CD4-positive, alpha-beta memory T cell (primary cell): ENCODE measurements at regions of chr2 and their contacts with region 1.

Region 1: DNA sequence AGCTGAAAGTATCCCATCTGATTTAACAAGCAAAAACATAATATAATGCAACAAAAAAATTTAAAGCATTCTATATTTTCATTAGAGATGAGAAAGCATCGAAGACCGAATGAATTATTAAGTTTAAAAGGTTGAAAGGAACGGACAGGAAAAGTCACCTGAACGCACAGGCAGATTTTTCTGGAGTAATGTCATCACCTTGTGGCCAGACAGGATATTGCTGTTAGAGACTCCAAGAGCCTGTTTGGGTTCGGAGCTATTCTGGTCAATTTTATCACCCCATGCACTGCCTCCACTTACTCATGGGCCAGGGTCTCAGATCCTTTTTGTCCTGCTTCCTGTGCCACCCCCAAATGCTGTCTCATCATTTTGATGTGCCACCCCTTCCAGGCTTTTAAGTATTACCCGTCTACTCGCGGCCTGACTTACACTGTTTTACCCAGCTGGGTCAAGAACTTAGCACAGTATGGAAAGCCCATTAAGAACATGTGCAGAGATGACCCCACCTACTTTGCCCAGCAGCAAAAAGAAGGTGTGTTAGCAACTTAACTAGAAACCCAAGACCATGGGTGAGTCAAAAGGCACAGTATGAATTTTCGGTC is 27.3 kb downstream of the GKN2 start:
- DNase-seq: peak; percentile 57 to 73 (median 66)
- H3K4me3 ChIP-seq: no peak overlapping the region
- H3K4me3 Mint-ChIP-seq: peak overlapping the region in 1 of 8 donors; percentile 17
- H3K27ac ChIP-seq: no peak overlapping the region
- H3K27ac Mint-ChIP-seq: peak overlapping the region in 3 of 7 donors; percentile 17 to 43 (median 24)
- H3K4me1 ChIP-seq: peaks cover 4% of the 10 kb centered on the region
- H3K4me1 Mint-ChIP-seq: peaks cover 0 to 4% (median 2%) of the 10 kb centered on the region in 4 donors
- H3K27me3 ChIP-seq: no peaks in the 10 kb centered on the region
- H3K27me3 Mint-ChIP-seq: peaks cover 5 to 6% of the 10 kb centered on the region in 2 donors

Region 2: GRCh38 chr2:68487773-68488355 is 437.5 kb before region 1 on chr2:
- CTCF ChIA-PET with region 1: interaction called, 40 read pairs
- POLR2A ChIA-PET with region 1: interaction called, 6 read pairs
- intact Hi-C with region 1: loop called (anchors 1 kb)
- DNase-seq: peak in 4 of 5 donors; percentile 24 to 39 (median 31)
- H3K4me3 ChIP-seq: no peak overlapping the region
- H3K4me3 Mint-ChIP-seq: peak overlapping the region in 1 of 8 donors; percentile 28
- H3K27ac ChIP-seq: no peak overlapping the region
- H3K27ac Mint-ChIP-seq: peak overlapping the region in 2 of 7 donors; percentile 35 to 38
- H3K4me1 ChIP-seq: no peaks in the 10 kb centered on the region
- H3K4me1 Mint-ChIP-seq: peaks cover 0 to 5% (median 1%) of the 10 kb centered on the region in 4 donors
- H3K27me3 ChIP-seq: no peaks in the 10 kb centered on the region
- H3K27me3 Mint-ChIP-seq: no peaks in the 10 kb centered on the region

Region 3: DNA sequence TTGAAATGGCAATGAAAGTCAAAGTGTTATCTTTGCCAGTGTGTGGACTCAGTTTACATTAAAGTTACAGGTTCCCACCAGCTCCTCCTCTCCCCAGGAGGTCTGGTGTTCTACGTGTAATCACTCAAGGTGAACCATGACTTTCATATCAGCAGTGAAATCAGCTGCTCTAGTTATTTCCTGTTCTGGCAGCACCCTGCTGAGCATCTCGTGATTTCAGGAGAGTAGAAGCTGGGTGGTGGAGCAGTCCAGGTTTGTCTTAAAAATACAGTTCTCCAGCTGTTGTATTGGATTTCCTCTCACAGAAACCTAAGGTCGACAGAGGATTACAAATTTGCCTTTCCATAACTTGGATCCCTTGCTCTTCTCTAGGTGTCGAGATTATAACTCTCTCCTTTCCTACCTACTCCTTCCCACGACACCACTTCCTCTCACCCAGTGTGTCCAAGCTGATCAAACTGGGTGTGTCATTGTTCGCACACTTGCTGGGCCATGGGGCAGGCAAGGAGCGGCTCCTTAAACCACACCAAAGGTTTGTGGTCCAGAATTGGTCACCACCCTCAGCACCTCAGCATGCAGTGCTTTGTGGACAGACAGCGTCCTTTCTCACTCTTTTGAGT is 203.8 kb before region 1 on chr2:
- CTCF ChIA-PET with region 1: interaction called, 10 read pairs
- POLR2A ChIA-PET with region 1: no interaction called
- intact Hi-C with region 1: no loop called
- DNase-seq: peak; percentile 64 to 78 (median 70)
- H3K4me3 ChIP-seq: peak overlapping the region in 1 of 2 donors; percentile 6
- H3K4me3 Mint-ChIP-seq: peak overlapping the region; percentile 63 to 89 (median 83)
- H3K27ac ChIP-seq: peak overlapping the region; percentile 54
- H3K27ac Mint-ChIP-seq: peak overlapping the region; percentile 91 to 98 (median 96)
- H3K4me1 ChIP-seq: peaks cover 96% of the 10 kb centered on the region
- H3K4me1 Mint-ChIP-seq: peaks cover 75 to 99% (median 90%) of the 10 kb centered on the region in 4 donors
- H3K27me3 ChIP-seq: no peaks in the 10 kb centered on the region
- H3K27me3 Mint-ChIP-seq: no peaks in the 10 kb centered on the region

Region 4: DNA sequence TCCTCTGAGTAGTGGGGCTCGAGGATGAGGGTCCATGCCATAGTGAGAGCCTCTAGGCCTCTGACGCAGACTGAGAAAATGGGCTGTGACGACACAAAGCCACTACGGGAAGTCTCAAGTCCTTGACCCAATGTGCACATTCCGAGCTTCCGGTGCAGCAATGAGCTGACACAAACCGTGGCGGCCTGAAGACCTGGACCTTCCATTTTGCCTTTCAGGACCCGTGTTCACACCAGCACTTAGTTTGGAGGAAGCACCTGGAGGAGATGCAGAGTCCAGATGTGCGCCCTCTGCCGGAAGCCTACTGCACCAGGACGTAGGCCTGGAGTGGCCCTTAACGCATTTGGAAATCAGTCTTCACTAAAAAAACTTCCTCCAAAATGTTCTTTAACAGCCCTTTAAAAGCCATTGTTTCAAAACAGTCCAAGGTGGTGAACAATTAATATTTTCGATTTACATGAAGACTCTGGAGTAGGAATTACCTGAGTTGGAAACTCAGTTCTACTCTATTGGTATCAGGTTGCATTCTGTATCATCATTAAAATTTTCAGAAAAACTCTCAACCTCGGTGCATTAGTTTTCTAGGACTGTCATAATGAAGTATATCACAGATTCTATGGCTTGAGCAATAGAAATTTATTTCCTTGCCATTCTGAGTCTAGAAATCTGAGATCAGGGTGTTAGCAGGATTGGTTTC is 88.1 kb before region 1 on chr2:
- CTCF ChIA-PET with region 1: interaction called, 71 read pairs
- POLR2A ChIA-PET with region 1: no interaction called
- intact Hi-C with region 1: loop called (anchors 1 kb)
- DNase-seq: peak; percentile 50 to 62 (median 54)
- H3K4me3 ChIP-seq: no peak overlapping the region
- H3K4me3 Mint-ChIP-seq: peak overlapping the region in 2 of 8 donors; percentile 24 to 38
- H3K27ac ChIP-seq: no peak overlapping the region
- H3K27ac Mint-ChIP-seq: peak overlapping the region in 3 of 7 donors; percentile 47 to 66 (median 60)
- H3K4me1 ChIP-seq: peaks cover 26% of the 10 kb centered on the region
- H3K4me1 Mint-ChIP-seq: peaks cover 19 to 44% (median 31%) of the 10 kb centered on the region in 4 donors
- H3K27me3 ChIP-seq: no peaks in the 10 kb centered on the region
- H3K27me3 Mint-ChIP-seq: no peaks in the 10 kb centered on the region